Sigmoid colon (tissue), 7 donors: ENCODE measurements at regions of chr19 and their contacts with region 1.

Region 1: DNA sequence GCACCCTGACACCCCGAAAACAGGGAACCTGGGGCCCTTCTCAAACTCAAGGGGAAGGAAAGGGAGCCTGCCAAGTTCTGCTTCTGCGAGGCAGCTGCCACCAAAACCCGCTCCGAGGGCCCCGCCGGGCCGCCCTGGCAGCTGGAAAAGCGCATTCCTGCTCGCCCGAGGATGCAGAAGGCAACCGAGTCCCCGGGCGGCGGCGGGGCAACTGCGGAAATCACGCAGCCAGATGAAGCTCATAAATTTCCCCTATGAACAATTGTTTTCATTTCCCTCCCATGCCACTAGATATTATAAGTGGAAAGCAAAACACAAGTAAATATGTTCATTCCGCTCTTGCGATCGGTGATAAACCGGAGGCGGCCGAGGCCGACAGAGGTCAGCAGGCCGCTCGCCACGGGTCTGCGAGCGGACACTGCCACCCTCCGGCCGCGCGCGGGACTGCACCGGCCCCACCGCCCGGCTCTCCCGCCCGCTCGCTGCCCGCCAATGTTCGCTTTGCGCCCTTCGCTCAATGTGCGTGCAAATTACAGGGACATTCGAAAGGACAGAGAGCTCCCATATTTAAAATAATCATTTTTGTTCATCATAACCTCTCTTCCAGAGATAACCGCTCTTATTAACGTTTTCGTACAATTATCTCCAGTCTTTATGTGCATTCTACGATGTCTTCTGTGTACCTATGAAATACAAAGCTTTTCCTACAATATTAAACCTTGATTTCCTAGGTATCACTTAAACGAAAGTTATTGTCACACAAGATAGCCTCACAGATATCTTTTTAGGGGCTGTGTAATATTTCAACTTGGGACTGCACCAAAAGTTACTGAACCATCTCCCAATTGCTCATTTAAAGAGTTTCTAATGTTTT is 120.8 kb upstream of the ZNF507 start:
- DNase-seq: no peak
- H3K4me3 ChIP-seq: peak overlapping the region in 3 of 4 donors; percentile 8 to 29 (median 23)
- H3K27ac ChIP-seq: no peak overlapping the region
- H3K4me1 ChIP-seq: peaks cover 0 to 7% (median 5%) of the 10 kb centered on the region in 4 donors
- H3K27me3 ChIP-seq: peaks cover 0 to 5% (median 0%) of the 10 kb centered on the region in 3 donors
- CTCF ChIP-seq: peak; percentile 78 to 100 (median 92)
- EP300 ChIP-seq: no peak
- POLR2A ChIP-seq: no peak

Region 2: GRCh38 chr19:30669329-30670010 is 1555.1 kb before region 1 on chr19:
- intact Hi-C with region 1: loop called (anchors 5 kb)
- DNase-seq: peak; percentile 75
- H3K4me3 ChIP-seq: no peak overlapping the region
- H3K27ac ChIP-seq: no peak overlapping the region
- H3K4me1 ChIP-seq: peaks cover 0 to 13% (median 8%) of the 10 kb centered on the region in 4 donors
- H3K27me3 ChIP-seq: peaks cover 3 to 29% (median 20%) of the 10 kb centered on the region in 3 donors
- CTCF ChIP-seq: peak; percentile 31 to 81 (median 60)
- EP300 ChIP-seq: no peak
- POLR2A ChIP-seq: no peak

Region 3: GRCh38 chr19:30682999-30683536 is 1541.5 kb before region 1 on chr19:
- intact Hi-C with region 1: loop called (anchors 2 kb)
- DNase-seq: peak; percentile 85
- H3K4me3 ChIP-seq: no peak overlapping the region
- H3K27ac ChIP-seq: no peak overlapping the region
- H3K4me1 ChIP-seq: peaks cover 0 to 12% (median 5%) of the 10 kb centered on the region in 4 donors
- H3K27me3 ChIP-seq: peaks cover 0 to 13% (median 0%) of the 10 kb centered on the region in 3 donors
- CTCF ChIP-seq: peak; percentile 59 to 86 (median 82)
- EP300 ChIP-seq: no peak
- POLR2A ChIP-seq: no peak

Region 4: DNA sequence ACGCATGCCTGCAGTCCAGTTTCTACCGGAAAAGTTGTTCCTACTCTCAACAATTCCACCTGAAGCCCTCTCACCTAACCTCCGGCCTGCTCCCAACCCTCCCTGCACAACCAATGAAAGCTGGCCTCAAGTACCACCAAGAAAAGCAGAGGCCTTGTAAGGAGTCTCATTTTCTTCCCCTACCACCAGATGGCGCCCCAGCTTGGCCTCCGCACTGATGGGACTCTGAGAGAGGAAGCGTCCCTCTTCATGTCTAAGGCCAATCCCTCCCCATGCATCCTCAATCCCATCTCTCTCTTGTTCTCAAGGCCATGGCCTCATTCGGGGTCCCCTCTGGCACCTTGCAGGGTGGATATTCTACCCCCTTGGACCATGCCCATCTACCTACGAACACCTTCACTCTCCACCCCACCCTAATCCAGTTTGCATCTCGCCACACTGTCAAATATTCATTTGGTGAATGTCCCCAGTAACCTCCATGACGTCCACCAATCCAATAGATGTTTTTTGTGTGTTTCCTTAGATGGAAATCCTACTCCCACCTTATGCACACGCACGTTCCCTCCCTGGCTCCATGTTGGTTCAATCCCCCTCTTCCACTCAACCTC is 1439.7 kb before region 1 on chr19:
- intact Hi-C with region 1: loop called (anchors 2 kb)
- DNase-seq: peak; percentile 76
- H3K4me3 ChIP-seq: no peak overlapping the region
- H3K27ac ChIP-seq: no peak overlapping the region
- H3K4me1 ChIP-seq: no peaks in the 10 kb centered on the region
- H3K27me3 ChIP-seq: no peaks in the 10 kb centered on the region
- CTCF ChIP-seq: peak; percentile 37 to 65 (median 58)
- EP300 ChIP-seq: no peak
- POLR2A ChIP-seq: no peak

Region 5: DNA sequence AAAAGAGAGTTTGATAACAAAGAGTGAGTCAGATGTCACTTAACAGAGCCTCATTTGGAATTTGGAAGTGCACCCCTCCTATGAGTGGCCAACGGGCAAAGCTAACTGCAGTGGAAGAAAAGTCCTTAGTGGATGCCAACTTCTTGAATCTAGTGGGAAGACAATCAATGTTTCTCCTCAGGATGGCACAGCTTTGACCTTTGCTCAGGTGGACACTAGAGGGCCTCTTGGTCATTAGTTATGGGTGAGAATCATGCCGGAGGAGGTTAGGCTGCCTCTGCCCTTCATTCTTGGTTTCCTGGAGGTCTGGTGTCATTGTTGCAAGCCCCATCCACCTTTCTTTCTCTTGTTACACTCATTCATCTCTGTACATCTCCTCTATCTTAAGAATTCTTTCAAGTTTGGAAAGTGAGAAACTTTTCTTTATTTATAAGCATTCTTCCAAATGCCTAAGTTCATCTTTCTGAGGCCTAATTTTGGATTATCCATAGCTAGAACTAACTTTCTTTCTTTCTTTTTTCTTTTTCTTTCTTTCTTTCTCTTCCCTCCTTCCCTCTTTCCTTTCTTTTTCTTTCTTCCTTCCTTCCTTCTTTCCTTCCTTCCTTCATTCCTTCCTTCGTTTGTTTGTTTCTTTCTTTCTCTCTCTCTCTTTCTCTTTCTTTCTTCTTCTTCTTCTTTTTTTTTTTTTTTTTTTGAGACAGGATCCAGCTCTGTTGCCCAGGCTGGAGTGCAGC is 548.2 kb before region 1 on chr19:
- intact Hi-C with region 1: loop called (anchors 5 kb)
- DNase-seq: no peak
- H3K4me3 ChIP-seq: no peak overlapping the region
- H3K27ac ChIP-seq: no peak overlapping the region
- H3K4me1 ChIP-seq: peaks cover 0 to 9% (median 4%) of the 10 kb centered on the region in 4 donors
- H3K27me3 ChIP-seq: no peaks in the 10 kb centered on the region
- CTCF ChIP-seq: peak in 1 of 4 experiments; percentile 23
- EP300 ChIP-seq: no peak
- POLR2A ChIP-seq: no peak

Region 6: DNA sequence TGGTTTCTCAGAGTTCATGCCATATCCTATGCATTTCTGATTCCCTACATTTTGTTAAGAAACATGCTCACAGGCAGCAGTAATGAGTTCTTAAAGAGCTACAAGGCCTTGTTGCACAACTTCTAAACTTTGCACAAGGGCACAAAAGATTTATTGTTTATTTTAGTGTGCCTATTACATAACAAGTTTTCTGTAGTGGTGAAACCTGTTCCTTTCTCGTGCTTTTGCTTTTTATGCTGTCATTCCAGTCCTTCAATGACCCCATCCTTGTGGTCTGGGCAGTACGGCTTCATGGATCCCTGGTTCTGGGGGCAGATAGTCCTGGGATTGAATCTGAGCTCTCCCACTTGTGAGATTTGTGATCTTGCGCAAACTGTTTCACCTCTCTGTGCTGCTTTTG is 138.6 kb after region 1 on chr19:
- intact Hi-C with region 1: no loop called
- DNase-seq: no peak
- H3K4me3 ChIP-seq: no peak overlapping the region
- H3K27ac ChIP-seq: peak overlapping the region; percentile 32 to 71 (median 52)
- H3K4me1 ChIP-seq: peaks cover 0 to 32% (median 23%) of the 10 kb centered on the region in 4 donors
- H3K27me3 ChIP-seq: no peaks in the 10 kb centered on the region
- CTCF ChIP-seq: no peak
- EP300 ChIP-seq: peak in 1 of 4 donors; percentile 40
- POLR2A ChIP-seq: no peak